ENCODE measurements at regions of chr3 and their contacts with region 1.

Region 1: GRCh38 chr3:56915966-56916586 is 114.3 kb upstream of the ARHGEF3 start:
- DNase-seq: peak; percentile 33 to 82 (median 76)
- ATAC-seq: peak; percentile 94
- H3K4me3 ChIP-seq: peak overlapping the region; percentile 97
- H3K4me3 Mint-ChIP-seq: peak overlapping the region; percentile 89 to 98 (median 94)
- H3K27ac ChIP-seq: peak overlapping the region; percentile 81
- H3K27ac Mint-ChIP-seq: peak overlapping the region; percentile 92 to 99 (median 98)
- H3K4me1 ChIP-seq: peaks cover 42 to 47% of the 10 kb centered on the region in 2 donors
- H3K4me1 Mint-ChIP-seq: peaks cover 54 to 86% (median 83%) of the 10 kb centered on the region in 7 donors
- H3K27me3 ChIP-seq: no peaks in the 10 kb centered on the region
- H3K27me3 Mint-ChIP-seq: no peaks in the 10 kb centered on the region

Region 2: GRCh38 chr3:56682462-56683121 is 233.5 kb before region 1 on chr3:
- CTCF ChIA-PET with region 1: no interaction called
- POLR2A ChIA-PET with region 1: interaction called, 8 read pairs
- intact Hi-C with region 1: loop called in 1 of 2 experiments (anchors 5 kb)
- DNase-seq: peak; percentile 70 to 84 (median 79)
- ATAC-seq: peak; percentile 81
- H3K4me3 ChIP-seq: peak overlapping the region; percentile 93
- H3K4me3 Mint-ChIP-seq: peak overlapping the region; percentile 88 to 100 (median 94)
- H3K27ac ChIP-seq: peak overlapping the region; percentile 92
- H3K27ac Mint-ChIP-seq: peak overlapping the region; percentile 90 to 100 (median 94)
- H3K4me1 ChIP-seq: peaks cover 33 to 34% of the 10 kb centered on the region in 2 donors
- H3K4me1 Mint-ChIP-seq: peaks cover 28 to 55% (median 48%) of the 10 kb centered on the region in 7 donors
- H3K27me3 ChIP-seq: no peaks in the 10 kb centered on the region
- H3K27me3 Mint-ChIP-seq: no peaks in the 10 kb centered on the region

Region 3: DNA sequence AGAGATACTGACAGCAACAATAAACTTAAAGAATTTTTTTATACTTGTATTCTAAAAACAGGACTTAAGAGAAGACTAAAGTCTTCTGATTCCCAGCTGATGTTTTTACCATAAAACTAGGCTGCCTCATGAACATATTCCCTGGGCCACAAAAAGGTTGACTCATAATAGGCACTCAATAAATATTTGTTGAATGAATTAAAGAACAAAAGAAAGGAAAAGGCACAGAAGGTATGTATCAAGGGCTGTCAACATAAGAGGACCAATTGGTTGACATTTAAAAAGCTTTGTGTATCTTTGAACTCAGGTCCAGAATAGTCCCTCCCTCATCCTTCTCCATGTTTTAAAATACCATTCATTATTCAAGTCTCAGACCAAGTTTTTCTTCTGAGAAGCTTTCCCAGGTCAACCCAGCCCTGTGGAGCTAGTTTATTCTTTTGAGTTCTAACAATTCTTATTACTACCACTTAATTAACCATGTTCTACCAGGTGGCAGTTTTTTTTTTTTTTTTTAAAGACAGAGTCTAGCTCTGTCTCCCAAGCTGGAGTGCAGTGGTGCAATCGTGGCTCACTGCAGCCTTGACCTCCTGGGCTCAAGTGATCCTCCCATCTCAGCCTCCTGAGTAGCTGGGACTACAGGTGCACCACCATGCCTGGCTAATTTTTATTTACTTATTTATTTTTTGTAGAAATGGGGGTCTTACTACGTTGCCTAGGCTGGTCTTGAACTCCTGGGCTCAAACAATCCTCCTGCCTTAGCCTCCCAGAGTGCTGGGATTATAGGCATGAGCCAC is 96.9 kb before region 1 on chr3:
- CTCF ChIA-PET with region 1: interaction called, 3 read pairs
- POLR2A ChIA-PET with region 1: interaction called, 6 read pairs
- intact Hi-C with region 1: loop called in 1 of 2 experiments (anchors 5 kb)
- DNase-seq: no peak
- ATAC-seq: no peak
- H3K4me3 ChIP-seq: no peak overlapping the region
- H3K4me3 Mint-ChIP-seq: peak overlapping the region in 2 of 10 donors; percentile 2 to 8
- H3K27ac ChIP-seq: no peak overlapping the region
- H3K27ac Mint-ChIP-seq: peak overlapping the region in 7 of 9 donors; percentile 17 to 84 (median 58)
- H3K4me1 ChIP-seq: peaks cover 4 to 23% of the 10 kb centered on the region in 2 donors
- H3K4me1 Mint-ChIP-seq: peaks cover 35 to 87% (median 67%) of the 10 kb centered on the region in 7 donors
- H3K27me3 ChIP-seq: no peaks in the 10 kb centered on the region
- H3K27me3 Mint-ChIP-seq: no peaks in the 10 kb centered on the region

Region 4: GRCh38 chr3:56869157-56869889 is 46.8 kb before region 1 on chr3:
- CTCF ChIA-PET with region 1: no interaction called
- POLR2A ChIA-PET with region 1: interaction called, 12 read pairs
- intact Hi-C with region 1: loop called in 1 of 2 experiments (anchors 2 kb)
- DNase-seq: no peak
- ATAC-seq: no peak
- H3K4me3 ChIP-seq: no peak overlapping the region
- H3K4me3 Mint-ChIP-seq: peak overlapping the region in 8 of 10 donors; percentile 6 to 81 (median 51)
- H3K27ac ChIP-seq: no peak overlapping the region
- H3K27ac Mint-ChIP-seq: peak overlapping the region in 7 of 9 donors; percentile 4 to 82 (median 60)
- H3K4me1 ChIP-seq: peaks cover 0 to 14% of the 10 kb centered on the region in 2 donors
- H3K4me1 Mint-ChIP-seq: peaks cover 35 to 71% (median 60%) of the 10 kb centered on the region in 7 donors
- H3K27me3 ChIP-seq: no peaks in the 10 kb centered on the region
- H3K27me3 Mint-ChIP-seq: no peaks in the 10 kb centered on the region

Region 5: GRCh38 chr3:56903231-56903782 is 12.8 kb before region 1 on chr3:
- CTCF ChIA-PET with region 1: interaction called, 4 read pairs
- POLR2A ChIA-PET with region 1: interaction called, 22 read pairs
- intact Hi-C with region 1: no loop called
- DNase-seq: no peak
- ATAC-seq: no peak
- H3K4me3 ChIP-seq: no peak overlapping the region
- H3K4me3 Mint-ChIP-seq: peak overlapping the region in 2 of 10 donors; percentile 1 to 10
- H3K27ac ChIP-seq: no peak overlapping the region
- H3K27ac Mint-ChIP-seq: peak overlapping the region in 8 of 9 donors; percentile 0 to 77 (median 44)
- H3K4me1 ChIP-seq: peaks cover 0 to 27% of the 10 kb centered on the region in 2 donors
- H3K4me1 Mint-ChIP-seq: peaks cover 44 to 74% (median 66%) of the 10 kb centered on the region in 7 donors
- H3K27me3 ChIP-seq: no peaks in the 10 kb centered on the region
- H3K27me3 Mint-ChIP-seq: no peaks in the 10 kb centered on the region

Region 6: GRCh38 chr3:57597122-57597923 is 681.2 kb after region 1 on chr3 and contains the start of gene ARF4:
- CTCF ChIA-PET with region 1: no interaction called
- POLR2A ChIA-PET with region 1: no interaction called
- intact Hi-C with region 1: loop called in 1 of 2 experiments (anchors 5 kb)
- DNase-seq: peak; percentile 99 to 100 (median 100)
- ATAC-seq: peak; percentile 93
- H3K4me3 ChIP-seq: peak within 1 kb of the TSS; percentile 86
- H3K4me3 Mint-ChIP-seq: peak within 1 kb of the TSS; percentile 91 to 99 (median 98)
- H3K27ac ChIP-seq: peak within 1 kb of the TSS; percentile 94
- H3K27ac Mint-ChIP-seq: peak within 1 kb of the TSS; percentile 95 to 100 (median 99)
- H3K4me1 ChIP-seq: peaks cover 29 to 30% of the 10 kb centered on the region in 2 donors
- H3K4me1 Mint-ChIP-seq: peaks cover 33 to 64% (median 51%) of the 10 kb centered on the region in 7 donors
- H3K27me3 ChIP-seq: no peaks in the 10 kb centered on the region
- H3K27me3 Mint-ChIP-seq: no peaks in the 10 kb centered on the region
- total RNA-seq, gene ARF4: 50.9 to 85.5 (median 57.5) TPM

Measured in naive thymus-derived CD4-positive, alpha-beta T cell (primary cell).